Mammary epithelial cell (primary cell): ENCODE measurements at regions of chr9 and their contacts with region 1.

Region 1: DNA sequence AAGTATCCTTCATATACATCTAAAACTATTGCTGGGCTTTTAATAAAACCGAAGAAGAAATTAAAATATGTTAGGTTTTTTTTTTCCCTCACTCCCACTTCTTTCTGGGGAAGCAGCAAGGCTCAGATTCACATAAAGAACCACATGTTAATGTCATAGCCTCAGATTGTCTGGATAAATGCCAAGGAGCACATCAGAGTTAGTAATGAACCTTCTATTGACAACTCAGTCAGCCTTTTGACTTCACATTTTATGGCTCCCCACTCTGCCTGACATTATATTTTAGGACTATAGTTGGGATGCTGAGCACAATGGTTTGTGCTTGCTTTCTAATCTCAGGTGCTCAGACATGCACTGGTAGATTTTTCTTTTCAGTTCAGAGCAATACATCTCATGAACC is 21.8 kb downstream of the DMAC1 start:
- DNase-seq: peak; percentile 14
- H3K4me3 ChIP-seq: no peak overlapping the region
- H3K27ac ChIP-seq: no peak overlapping the region
- H3K4me1 ChIP-seq: peaks cover 4% of the 10 kb centered on the region
- H3K27me3 ChIP-seq: no peaks in the 10 kb centered on the region
- CTCF ChIP-seq: no peak

Region 2: GRCh38 chr9:7622481-7622880 is 155.3 kb before region 1 on chr9:
- CTCF ChIA-PET with region 1: no interaction called
- dilution Hi-C with region 1: no loop called
- in situ Hi-C with region 1: no loop called
- intact Hi-C with region 1: no loop called
- DNase-seq: no peak
- H3K4me3 ChIP-seq: no peak overlapping the region
- H3K27ac ChIP-seq: no peak overlapping the region
- H3K4me1 ChIP-seq: no peaks in the 10 kb centered on the region
- H3K27me3 ChIP-seq: no peaks in the 10 kb centered on the region
- CTCF ChIP-seq: no peak

Region 3: DNA sequence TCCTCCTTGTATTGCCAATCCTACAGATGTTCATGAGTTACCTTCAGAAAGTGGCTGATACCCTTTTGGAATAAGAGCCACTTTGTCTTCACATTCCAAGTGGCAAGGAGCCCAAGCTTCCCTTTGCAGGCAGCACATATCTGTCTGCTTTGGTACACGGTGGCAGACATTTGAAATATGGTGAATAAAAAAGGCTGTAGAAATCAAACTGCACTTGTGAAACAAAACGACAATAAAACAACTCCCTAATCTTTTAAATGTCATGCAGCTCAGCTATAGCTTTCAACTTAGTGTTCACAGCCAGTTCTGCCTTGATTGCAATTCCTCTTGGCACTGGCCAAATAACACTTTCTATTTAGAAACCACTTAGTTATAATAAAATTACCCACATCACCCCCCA is 56.8 kb after region 1 on chr9:
- CTCF ChIA-PET with region 1: no interaction called
- dilution Hi-C with region 1: loop called (anchors 5 kb)
- in situ Hi-C with region 1: no loop called
- intact Hi-C with region 1: no loop called
- DNase-seq: no peak
- H3K4me3 ChIP-seq: no peak overlapping the region
- H3K27ac ChIP-seq: no peak overlapping the region
- H3K4me1 ChIP-seq: no peaks in the 10 kb centered on the region
- H3K27me3 ChIP-seq: no peaks in the 10 kb centered on the region
- CTCF ChIP-seq: no peak